Mammary epithelial cell (primary cell): ENCODE measurements at regions of chr2 and their contacts with region 1.

Region 1: GRCh38 chr2:99462084-99462483 is 27.7 kb downstream of the REV1 start:
- DNase-seq: no peak
- H3K4me3 ChIP-seq: no peak overlapping the region
- H3K27ac ChIP-seq: no peak overlapping the region
- H3K4me1 ChIP-seq: no peaks in the 10 kb centered on the region
- H3K27me3 ChIP-seq: no peaks in the 10 kb centered on the region
- CTCF ChIP-seq: no peak

Region 2: GRCh38 chr2:99420751-99421299 is 41.3 kb before region 1 on chr2:
- CTCF ChIA-PET with region 1: no interaction called
- dilution Hi-C with region 1: loop called (anchors 5 kb)
- in situ Hi-C with region 1: no loop called
- intact Hi-C with region 1: no loop called
- DNase-seq: no peak
- H3K4me3 ChIP-seq: no peak overlapping the region
- H3K27ac ChIP-seq: no peak overlapping the region
- H3K4me1 ChIP-seq: peaks cover 10% of the 10 kb centered on the region
- H3K27me3 ChIP-seq: no peaks in the 10 kb centered on the region
- CTCF ChIP-seq: no peak

Region 3: DNA sequence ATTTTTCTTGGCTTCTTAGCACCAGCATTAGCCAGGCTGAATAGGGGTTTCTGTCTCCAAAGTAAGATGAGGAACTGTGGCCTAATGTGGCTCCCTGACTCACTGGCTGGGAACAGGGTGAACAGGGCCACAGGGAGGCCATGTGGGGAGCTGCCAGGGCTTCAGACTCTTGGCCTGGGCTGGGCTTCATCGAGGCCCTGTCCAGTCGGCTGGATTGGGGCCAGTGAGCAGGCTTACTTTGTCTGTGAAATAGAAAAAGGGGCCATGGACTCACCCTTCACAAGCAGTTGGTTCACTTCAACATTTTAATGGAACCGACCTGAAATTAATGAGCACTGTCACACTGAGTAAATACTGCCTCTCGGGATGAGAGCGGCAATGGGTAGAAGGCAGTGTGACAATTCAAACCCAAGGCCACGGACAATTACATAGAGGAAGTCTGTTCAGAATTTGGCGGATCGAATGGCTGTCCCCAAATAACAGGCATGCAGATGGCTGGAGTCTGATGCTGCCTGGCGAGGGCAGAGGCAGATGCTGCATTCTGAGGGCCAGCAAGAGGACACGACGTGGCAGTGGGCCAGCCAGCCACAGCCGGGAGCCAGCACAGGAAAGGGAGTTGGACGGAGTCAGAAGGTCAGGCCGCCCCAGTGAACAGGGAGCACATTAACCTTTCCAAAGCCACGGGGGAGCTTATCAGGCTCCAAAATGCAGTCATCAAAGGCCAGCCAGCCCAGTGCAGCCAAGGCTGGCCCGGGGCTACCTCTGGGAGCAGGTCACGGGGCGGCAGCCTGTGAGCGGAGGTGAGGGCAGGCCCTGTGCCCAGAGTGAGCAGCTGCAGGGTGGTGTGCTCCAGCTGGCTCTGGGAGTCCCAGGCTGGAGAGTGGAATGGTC is 174.3 kb after region 1 on chr2:
- CTCF ChIA-PET with region 1: no interaction called
- dilution Hi-C with region 1: no loop called
- in situ Hi-C with region 1: no loop called
- intact Hi-C with region 1: no loop called
- DNase-seq: no peak
- H3K4me3 ChIP-seq: no peak overlapping the region
- H3K27ac ChIP-seq: no peak overlapping the region
- H3K4me1 ChIP-seq: no peaks in the 10 kb centered on the region
- H3K27me3 ChIP-seq: peaks cover 5% of the 10 kb centered on the region
- CTCF ChIP-seq: no peak